ENCODE measurements at regions of chr2 and their contacts with region 1.

Region 1: GRCh38 chr2:28958689-28959088 is 22.4 kb upstream of the TOGARAM2 start:
- DNase-seq: peak; percentile 83
- H3K4me3 Mint-ChIP-seq: no peak overlapping the region
- H3K27ac Mint-ChIP-seq: no peak overlapping the region
- H3K4me1 Mint-ChIP-seq: peaks cover 13% of the 10 kb centered on the region
- H3K27me3 Mint-ChIP-seq: no peaks in the 10 kb centered on the region
- CTCF ChIP-seq: peak; percentile 56

Region 2: GRCh38 chr2:28621172-28622100 is 337.3 kb before region 1 on chr2:
- CTCF ChIA-PET with region 1: no interaction called
- POLR2A ChIA-PET with region 1: no interaction called
- intact Hi-C with region 1: no loop called
- DNase-seq: peak; percentile 73
- H3K4me3 Mint-ChIP-seq: peak overlapping the region; percentile 9
- H3K27ac Mint-ChIP-seq: peak overlapping the region; percentile 98
- H3K4me1 Mint-ChIP-seq: peaks cover 27% of the 10 kb centered on the region
- H3K27me3 Mint-ChIP-seq: no peaks in the 10 kb centered on the region
- CTCF ChIP-seq: peak; percentile 30

Region 3: DNA sequence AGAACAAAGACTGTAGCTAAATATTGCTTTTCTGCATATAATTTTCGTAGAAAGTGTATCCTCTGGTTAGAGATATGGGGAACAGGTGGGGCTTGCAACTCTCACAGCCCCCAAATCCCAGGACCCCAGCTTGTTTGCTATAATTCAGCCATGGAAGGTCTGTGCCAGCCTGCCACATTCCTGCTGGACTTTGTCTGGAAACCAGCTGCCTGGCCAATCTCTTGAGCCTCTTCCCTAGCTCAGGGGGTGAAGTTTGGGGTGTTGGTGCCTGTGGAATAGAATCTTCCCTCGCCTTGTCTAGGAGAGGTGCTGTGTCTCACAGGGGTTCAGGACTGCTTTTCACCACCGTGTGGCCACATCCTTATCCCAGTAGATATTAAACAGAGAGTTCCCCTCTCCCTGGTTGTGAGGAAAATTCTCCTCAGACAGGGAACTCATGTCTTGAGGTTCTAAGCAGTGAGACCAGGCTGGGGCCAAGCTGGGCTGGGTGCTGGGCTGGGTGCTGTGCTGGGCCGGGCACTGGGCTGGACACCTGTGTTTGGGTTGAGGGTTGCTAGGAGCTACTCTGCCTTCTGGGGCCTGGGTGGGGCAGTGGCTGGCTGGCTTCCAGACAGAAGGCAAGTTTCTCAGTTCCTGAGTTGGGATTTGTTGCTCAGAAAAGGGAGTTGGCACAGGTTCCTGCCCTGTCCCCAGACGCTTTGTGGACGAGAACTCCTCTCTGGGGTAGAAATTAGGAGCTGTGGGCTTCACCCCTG is 34.7 kb after region 1 on chr2:
- CTCF ChIA-PET with region 1: interaction called, 3 read pairs
- POLR2A ChIA-PET with region 1: interaction called, 3 read pairs
- intact Hi-C with region 1: loop called (anchors 2 kb)
- DNase-seq: peak; percentile 75
- H3K4me3 Mint-ChIP-seq: peak overlapping the region; percentile 30
- H3K27ac Mint-ChIP-seq: peak overlapping the region; percentile 96
- H3K4me1 Mint-ChIP-seq: peaks cover 40% of the 10 kb centered on the region
- H3K27me3 Mint-ChIP-seq: no peaks in the 10 kb centered on the region
- CTCF ChIP-seq: no peak

Region 4: GRCh38 chr2:29115797-29116781 is 157.4 kb after region 1 on chr2:
- CTCF ChIA-PET with region 1: interaction called, 3 read pairs
- POLR2A ChIA-PET with region 1: interaction called, 3 read pairs
- intact Hi-C with region 1: loop called (anchors 5 kb)
- DNase-seq: peak; percentile 87
- H3K4me3 Mint-ChIP-seq: peak overlapping the region; percentile 90
- H3K27ac Mint-ChIP-seq: peak overlapping the region; percentile 49
- H3K4me1 Mint-ChIP-seq: peaks cover 40% of the 10 kb centered on the region
- H3K27me3 Mint-ChIP-seq: no peaks in the 10 kb centered on the region
- CTCF ChIP-seq: no peak

Region 5: GRCh38 chr2:29841386-29842004 is 882.8 kb after region 1 on chr2:
- CTCF ChIA-PET with region 1: interaction called, 3 read pairs
- POLR2A ChIA-PET with region 1: no interaction called
- intact Hi-C with region 1: loop called (anchors 5 kb)
- DNase-seq: peak; percentile 46
- H3K4me3 Mint-ChIP-seq: no peak overlapping the region
- H3K27ac Mint-ChIP-seq: no peak overlapping the region
- H3K4me1 Mint-ChIP-seq: no peaks in the 10 kb centered on the region
- H3K27me3 Mint-ChIP-seq: peaks cover 44% of the 10 kb centered on the region
- CTCF ChIP-seq: peak; percentile 85

Region 6: DNA sequence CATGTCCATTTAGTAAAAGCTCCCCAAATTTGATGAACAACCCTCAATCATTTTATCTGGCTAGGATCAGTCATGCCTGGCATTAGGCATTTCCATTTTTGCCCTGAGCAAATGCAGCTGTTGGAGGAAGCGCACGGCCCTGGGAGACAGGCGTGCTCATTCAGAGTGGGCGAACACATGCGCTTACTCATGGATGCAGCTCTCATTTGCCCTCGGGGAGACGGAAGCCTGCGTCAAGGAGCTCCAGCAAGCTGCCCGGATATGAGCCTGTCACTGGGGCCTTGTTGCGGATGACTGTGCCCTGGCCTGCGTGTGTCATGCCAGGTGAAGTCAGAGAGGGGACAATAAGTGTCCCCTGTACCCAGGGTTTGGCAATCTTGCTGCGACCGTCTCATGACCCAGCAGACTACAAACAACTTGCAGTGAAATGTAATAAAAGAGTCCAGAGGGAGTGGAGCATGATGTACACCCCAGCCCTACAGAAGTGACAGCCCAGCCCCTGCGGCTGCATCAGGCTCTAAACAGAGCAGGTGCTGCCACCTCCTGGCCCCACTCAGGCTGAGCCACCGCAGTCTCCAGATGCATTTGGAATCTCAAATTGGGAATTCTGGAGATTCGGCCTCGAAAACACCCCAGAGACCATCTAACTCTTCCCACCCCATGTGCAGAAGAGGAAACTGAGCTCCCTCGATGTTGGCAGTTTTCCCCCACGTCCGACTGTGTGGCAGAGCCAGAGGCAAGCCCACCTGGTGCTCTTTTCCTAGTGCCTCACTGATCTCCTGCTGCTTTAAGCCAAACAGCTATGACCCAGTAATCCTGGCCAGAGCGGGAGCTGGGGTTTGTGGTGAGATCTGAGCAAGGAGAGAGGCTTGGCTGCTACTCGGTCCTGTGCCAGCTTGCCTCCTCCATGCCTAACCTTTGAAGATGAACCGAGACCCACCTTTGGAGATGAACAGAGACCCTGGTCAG is 1067.7 kb after region 1 on chr2:
- CTCF ChIA-PET with region 1: interaction called, 4 read pairs
- POLR2A ChIA-PET with region 1: no interaction called
- intact Hi-C with region 1: loop called (anchors 5 kb)
- DNase-seq: peak; percentile 79
- H3K4me3 Mint-ChIP-seq: no peak overlapping the region
- H3K27ac Mint-ChIP-seq: no peak overlapping the region
- H3K4me1 Mint-ChIP-seq: no peaks in the 10 kb centered on the region
- H3K27me3 Mint-ChIP-seq: peaks cover 39% of the 10 kb centered on the region
- CTCF ChIP-seq: peak; percentile 71